Activated CD4-positive, alpha-beta memory T cell treated with anti-CD3 and anti-CD28 coated beads for 36 hours (primary cell): ENCODE measurements at regions of chr3 and their contacts with region 1.

Region 1: DNA sequence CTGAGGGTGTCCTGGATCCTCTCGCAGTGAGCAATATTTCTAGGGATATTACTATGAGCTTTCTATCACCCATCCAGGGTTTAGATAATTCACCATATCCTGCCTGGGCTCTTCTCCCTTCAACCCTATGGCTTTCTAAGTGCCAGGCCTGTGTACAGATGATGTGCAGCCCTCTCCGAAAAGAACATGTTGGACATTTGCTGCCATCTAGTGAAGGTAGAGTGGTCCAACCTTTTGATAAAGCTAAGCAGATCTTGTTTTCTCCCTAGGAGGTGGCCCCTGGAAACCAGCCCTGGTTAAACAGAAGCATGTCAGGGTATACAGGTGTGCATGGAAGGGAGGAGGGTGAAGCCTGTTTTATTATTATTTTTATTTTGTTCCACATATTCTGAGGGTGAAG is 27.9 kb upstream of the SCN10A start:
- DNase-seq: no peak
- H3K4me3 Mint-ChIP-seq: no peak overlapping the region
- H3K27ac Mint-ChIP-seq: no peak overlapping the region
- H3K4me1 Mint-ChIP-seq: no peaks in the 10 kb centered on the region
- H3K27me3 Mint-ChIP-seq: peaks cover 3% of the 10 kb centered on the region

Region 2: DNA sequence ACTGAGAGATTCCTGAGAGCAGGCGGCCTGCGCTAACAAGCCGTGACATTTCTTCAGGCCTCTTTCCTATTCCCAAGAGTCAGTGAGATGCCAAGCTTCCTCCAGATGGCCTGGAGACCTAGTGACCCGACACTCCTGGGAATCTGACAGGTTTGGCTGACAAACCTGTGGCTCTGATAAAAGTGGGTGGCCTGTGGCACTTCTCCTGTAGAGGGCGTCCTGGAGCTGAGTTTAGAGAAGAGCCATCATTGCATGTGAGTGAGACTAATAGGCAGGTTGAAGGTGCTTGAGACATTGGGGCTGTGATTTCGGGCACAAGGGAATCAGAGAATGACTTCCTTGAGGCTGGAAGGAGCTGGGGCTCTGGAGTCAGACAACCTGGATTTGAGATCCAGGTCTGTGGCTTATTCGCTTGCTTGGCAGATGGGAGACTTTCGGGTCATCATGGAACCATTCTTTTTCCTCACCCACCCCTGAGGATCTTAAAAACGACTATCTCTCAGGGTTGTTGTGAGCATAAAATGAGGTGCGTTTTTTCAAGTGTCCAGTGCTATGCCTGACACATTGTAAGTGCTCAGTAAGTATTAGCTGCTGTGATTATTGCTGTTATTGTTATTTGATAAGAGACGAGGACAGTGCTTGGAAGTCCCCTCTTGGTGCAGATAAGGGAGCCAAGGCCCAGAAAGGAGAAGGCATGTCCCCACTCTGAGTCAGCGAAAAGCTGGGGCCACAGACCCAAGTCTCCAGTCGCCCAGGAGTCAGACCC is 105.1 kb before region 1 on chr3:
- CTCF ChIA-PET with region 1: interaction called, 3 read pairs
- POLR2A ChIA-PET with region 1: no interaction called
- intact Hi-C with region 1: loop called (anchors 1 kb)
- DNase-seq: peak; percentile 55
- H3K4me3 Mint-ChIP-seq: no peak overlapping the region
- H3K27ac Mint-ChIP-seq: no peak overlapping the region
- H3K4me1 Mint-ChIP-seq: no peaks in the 10 kb centered on the region
- H3K27me3 Mint-ChIP-seq: peaks cover 2% of the 10 kb centered on the region

Region 3: DNA sequence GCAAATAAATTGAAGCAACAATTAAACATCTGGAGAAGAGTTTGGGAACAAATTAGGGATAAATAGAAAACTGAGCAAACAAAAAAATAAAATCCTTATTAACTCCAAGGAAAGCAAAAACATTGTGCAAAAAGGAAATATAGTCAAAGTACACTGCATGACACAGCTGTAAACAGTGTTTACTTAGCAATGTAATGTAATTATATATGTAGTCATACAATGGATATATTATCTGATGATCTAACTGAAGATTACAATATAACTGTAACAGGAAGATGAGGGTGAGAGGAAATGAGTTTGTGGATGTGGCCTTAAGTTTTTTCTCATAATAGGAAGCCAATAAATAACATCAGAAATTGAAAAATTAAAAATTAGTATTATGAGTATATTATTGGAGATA is 70.4 kb before region 1 on chr3:
- CTCF ChIA-PET with region 1: no interaction called
- POLR2A ChIA-PET with region 1: no interaction called
- intact Hi-C with region 1: no loop called
- DNase-seq: no peak
- H3K4me3 Mint-ChIP-seq: no peak overlapping the region
- H3K27ac Mint-ChIP-seq: no peak overlapping the region
- H3K4me1 Mint-ChIP-seq: no peaks in the 10 kb centered on the region
- H3K27me3 Mint-ChIP-seq: peaks cover 16% of the 10 kb centered on the region

Region 4: DNA sequence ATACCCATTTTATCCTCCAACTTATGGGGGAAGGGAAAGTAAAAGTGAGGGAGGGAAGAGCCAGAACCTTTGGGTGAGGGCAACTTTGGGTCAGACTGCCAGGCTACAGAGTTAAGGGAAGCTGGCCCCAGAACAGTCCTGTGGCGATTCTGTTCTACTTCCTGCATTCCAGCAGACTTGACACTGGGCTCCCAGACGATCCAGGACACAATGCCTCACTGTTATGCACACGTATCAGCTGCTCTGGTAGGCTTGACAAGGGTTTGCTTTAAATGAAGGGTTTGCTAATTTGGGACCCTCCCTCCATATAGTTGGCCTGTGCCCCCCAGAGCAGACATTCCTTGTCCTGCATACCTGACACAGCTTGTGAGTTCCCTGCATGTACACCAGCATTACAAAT is 252.9 kb after region 1 on chr3:
- CTCF ChIA-PET with region 1: no interaction called
- POLR2A ChIA-PET with region 1: no interaction called
- intact Hi-C with region 1: no loop called
- DNase-seq: no peak
- H3K4me3 Mint-ChIP-seq: no peak overlapping the region
- H3K27ac Mint-ChIP-seq: no peak overlapping the region
- H3K4me1 Mint-ChIP-seq: no peaks in the 10 kb centered on the region
- H3K27me3 Mint-ChIP-seq: no peaks in the 10 kb centered on the region

Region 5: DNA sequence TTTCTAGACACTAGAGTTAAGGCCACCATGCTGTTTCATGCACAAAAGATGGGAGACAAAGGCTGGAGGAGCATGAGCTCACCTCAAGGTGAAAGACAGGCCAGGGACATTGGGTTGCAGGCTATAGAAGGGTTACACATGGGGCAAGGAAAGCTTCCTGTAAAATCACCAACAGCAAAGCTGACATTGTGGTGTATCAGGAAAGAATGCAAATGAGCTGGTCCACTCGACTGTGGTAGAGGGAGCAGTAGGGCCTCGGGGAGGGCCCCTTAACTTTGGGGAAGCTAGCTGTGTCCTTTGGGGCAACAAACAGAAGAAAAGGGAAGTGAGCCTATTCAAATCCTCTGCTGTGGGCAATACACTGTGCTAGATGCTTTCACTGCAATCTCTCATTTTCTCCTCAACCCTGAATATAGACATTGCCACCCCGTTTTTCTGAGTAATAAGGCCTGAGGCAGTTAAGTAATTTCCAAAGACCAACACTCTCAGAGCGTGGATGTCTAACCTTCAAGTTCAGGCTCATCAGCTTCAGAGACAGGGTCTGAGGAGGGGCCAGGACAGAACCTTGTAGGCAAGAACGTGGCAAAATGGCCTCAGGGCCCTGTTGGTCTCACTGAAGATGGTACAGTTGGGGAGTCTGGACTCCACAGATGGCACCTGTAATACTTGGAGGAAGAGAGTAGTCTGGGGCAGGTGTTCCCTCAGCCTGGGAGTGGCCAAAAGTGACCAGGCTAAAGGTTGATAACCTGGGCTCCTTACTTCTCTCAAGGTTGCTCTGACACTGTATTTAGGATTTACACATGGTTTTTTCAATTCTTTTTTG is 411.8 kb after region 1 on chr3:
- CTCF ChIA-PET with region 1: no interaction called
- POLR2A ChIA-PET with region 1: no interaction called
- intact Hi-C with region 1: no loop called
- DNase-seq: peak; percentile 49
- H3K4me3 Mint-ChIP-seq: no peak overlapping the region
- H3K27ac Mint-ChIP-seq: peak overlapping the region; percentile 72
- H3K4me1 Mint-ChIP-seq: peaks cover 25% of the 10 kb centered on the region
- H3K27me3 Mint-ChIP-seq: no peaks in the 10 kb centered on the region